Breast epithelium (tissue), 4 donors: ENCODE measurements at regions of chr3 and their contacts with region 1.

Region 1: GRCh38 chr3:58568572-58569286 is 8.5 kb downstream of the FAM107A start:
- DNase-seq: peak; percentile 63 to 84
- H3K4me3 ChIP-seq: no peak overlapping the region
- H3K27ac ChIP-seq: no peak overlapping the region
- H3K4me1 ChIP-seq: no peaks in the 10 kb centered on the region
- H3K27me3 ChIP-seq: no peaks in the 10 kb centered on the region
- CTCF ChIP-seq: peak; percentile 87 to 90 (median 87)
- POLR2A ChIP-seq: no peak

Region 2: DNA sequence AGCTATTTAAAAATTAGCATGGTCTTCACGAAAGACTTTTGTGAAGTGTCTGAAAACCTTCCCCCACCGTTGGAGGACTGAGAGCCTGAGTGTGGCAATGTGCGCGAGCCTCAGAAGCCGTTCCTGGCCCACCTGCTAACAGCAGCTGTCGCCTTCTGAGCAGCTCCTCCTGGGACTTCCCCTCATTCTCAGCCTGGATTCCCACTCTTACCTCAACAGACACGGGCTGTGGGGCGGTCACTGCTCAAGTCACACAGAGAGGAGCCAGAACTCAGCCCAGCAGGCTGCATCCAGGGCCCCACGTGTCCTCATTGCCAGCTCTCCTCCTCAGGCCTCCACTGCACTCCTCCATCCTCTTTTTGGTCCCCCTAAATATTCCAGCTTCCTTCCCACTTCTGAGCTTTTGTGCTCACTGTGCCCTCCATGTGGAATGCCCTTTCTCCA is 365.8 kb before region 1 on chr3:
- intact Hi-C with region 1: no loop called
- DNase-seq: no peak
- H3K4me3 ChIP-seq: no peak overlapping the region
- H3K27ac ChIP-seq: no peak overlapping the region
- H3K4me1 ChIP-seq: no peaks in the 10 kb centered on the region
- H3K27me3 ChIP-seq: no peaks in the 10 kb centered on the region
- CTCF ChIP-seq: no peak
- POLR2A ChIP-seq: no peak

Region 3: GRCh38 chr3:58617338-58617761 is 48.6 kb after region 1 on chr3:
- intact Hi-C with region 1: loop called (anchors 5 kb)
- DNase-seq: peak; percentile 59 to 81
- H3K4me3 ChIP-seq: peak overlapping the region in 1 of 3 donors; percentile 28
- H3K27ac ChIP-seq: peak overlapping the region; percentile 83 to 88
- H3K4me1 ChIP-seq: no peaks in the 10 kb centered on the region
- H3K27me3 ChIP-seq: no peaks in the 10 kb centered on the region
- CTCF ChIP-seq: no peak
- POLR2A ChIP-seq: no peak